Activated CD4-positive, alpha-beta T cell treated with anti-CD3 and anti-CD28 coated beads, Interleukin-2, amount 10 ng/mL, durations not matched to agents 7 days and 5 days (primary cell): ENCODE measurements at regions of chr4 and their contacts with region 1.

Region 1: GRCh38 chr4:6974138-6974848 is 64.7 kb downstream of the TBC1D14 start:
- DNase-seq: peak; percentile 87
- H3K4me3 Mint-ChIP-seq: no peak overlapping the region
- H3K27ac Mint-ChIP-seq: no peak overlapping the region
- H3K4me1 Mint-ChIP-seq: peaks cover 19% of the 10 kb centered on the region
- H3K27me3 Mint-ChIP-seq: no peaks in the 10 kb centered on the region

Region 2: DNA sequence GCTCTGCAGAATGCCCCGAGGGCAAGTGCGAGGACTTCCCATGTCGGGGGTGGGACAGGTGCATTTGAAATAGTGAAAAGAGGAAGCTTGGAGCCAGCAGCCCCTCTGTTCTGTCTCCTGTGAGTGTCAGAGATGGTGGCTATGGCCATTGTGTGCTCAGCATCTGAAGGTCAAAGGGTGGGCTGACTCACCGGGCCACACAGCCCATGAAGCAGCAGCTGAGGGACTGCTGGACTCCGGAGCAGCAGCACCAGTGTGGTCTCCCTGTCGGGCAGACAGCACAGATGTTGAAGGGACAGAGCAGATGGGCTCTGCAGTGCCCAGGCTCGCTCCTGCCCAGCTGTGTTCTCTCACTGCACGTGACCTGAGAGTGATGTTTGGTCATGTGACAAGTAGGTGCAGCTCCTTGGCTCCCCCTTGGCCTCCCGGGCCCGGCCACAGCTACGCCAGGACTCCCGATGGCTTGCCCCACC is 11.1 kb before region 1 on chr4:
- CTCF ChIA-PET with region 1: interaction called, 11 read pairs
- POLR2A ChIA-PET with region 1: no interaction called
- DNase-seq: no peak
- H3K4me3 Mint-ChIP-seq: no peak overlapping the region
- H3K27ac Mint-ChIP-seq: no peak overlapping the region
- H3K4me1 Mint-ChIP-seq: peaks cover 12% of the 10 kb centered on the region
- H3K27me3 Mint-ChIP-seq: no peaks in the 10 kb centered on the region

Region 3: DNA sequence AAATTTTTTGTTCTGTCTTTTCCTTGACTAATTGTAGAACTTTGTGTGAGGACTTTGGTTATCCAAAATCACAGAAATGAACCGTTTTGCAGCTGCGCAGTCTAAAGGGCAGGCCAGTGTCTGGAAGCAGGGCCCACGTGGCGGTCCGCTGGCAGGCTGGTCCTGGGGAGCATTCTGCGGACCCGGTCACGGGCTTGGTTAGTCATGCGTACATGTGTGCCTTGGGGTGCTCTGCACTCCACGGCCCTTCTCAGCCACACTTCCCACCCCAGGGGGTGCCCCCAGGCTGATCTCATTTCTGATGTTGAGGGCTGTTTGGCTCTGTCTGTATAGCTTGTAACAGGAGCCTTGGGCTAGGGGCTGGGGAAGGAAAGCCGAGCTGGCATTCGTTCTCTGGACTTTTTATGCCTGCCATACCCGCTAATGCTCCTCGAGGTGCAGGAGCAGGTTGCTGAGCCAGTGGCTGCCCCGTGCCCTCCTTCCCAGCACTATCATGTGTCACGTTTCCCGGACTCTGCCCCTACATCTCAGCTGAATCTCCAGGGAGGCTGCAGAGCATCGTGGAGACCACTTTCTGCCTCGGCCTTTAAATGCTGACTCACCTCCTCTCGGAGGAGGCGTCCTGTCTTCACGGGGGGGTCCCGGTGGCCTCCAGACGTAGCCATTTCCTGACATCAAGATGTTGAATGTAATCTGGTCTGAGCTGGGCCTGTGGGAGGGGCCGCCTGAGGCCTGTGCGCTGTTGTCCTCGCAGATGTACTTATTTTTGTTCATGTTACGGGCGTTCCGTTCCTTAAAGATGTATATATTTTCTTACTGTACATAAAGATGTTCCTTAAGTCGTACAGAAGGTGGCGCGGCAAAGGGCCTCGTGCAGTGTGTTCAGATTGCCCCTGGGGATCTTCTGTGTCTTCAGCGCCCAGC is 57.5 kb after region 1 on chr4:
- CTCF ChIA-PET with region 1: no interaction called
- POLR2A ChIA-PET with region 1: no interaction called
- DNase-seq: no peak
- H3K4me3 Mint-ChIP-seq: no peak overlapping the region
- H3K27ac Mint-ChIP-seq: no peak overlapping the region
- H3K4me1 Mint-ChIP-seq: peaks cover 3% of the 10 kb centered on the region
- H3K27me3 Mint-ChIP-seq: no peaks in the 10 kb centered on the region